ENCODE measurements at regions of chr20 and their contacts with region 1.

Region 1: DNA sequence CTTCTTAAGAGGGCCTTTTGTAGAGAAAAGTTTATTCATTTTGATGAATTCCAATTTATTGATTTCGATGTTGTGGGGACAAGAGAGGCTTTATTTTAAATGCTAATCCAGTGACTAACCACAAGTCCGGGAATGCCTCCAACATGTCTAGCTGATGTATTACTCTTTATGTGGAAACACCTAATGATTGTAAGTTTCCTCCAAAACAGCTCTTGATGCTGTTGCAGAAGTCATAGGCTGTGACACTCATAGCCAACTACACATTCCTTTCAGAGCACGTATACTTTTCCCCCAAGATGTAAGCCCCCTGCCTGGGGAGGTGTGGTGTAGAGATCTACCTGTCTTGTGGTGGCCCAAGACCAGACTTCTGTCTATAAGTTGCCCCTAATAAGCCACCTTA is 61.3 kb upstream of the RNF24 start:
- DNase-seq: no peak
- H3K4me3 ChIP-seq: no peak overlapping the region
- H3K27ac ChIP-seq: no peak overlapping the region
- H3K27me3 ChIP-seq: no peaks in the 10 kb centered on the region
- CTCF ChIP-seq: no peak

Region 2: GRCh38 chr20:3753098-3753980 is 323.3 kb before region 1 on chr20:
- intact Hi-C with region 1: loop called in 1 of 2 experiments (anchors 10 kb)
- DNase-seq: peak in 7 of 10 donors; percentile 41 to 76 (median 51)
- H3K4me3 ChIP-seq: no peak overlapping the region
- H3K27ac ChIP-seq: peak overlapping the region in 4 of 59 donors; percentile 10 to 39 (median 19)
- H3K27me3 ChIP-seq: peaks cover 0 to 25% (median 3%) of the 10 kb centered on the region in 45 donors
- CTCF ChIP-seq: peak; percentile 50 to 87 (median 75)

Region 3: GRCh38 chr20:4555188-4555890 is 478.7 kb after region 1 on chr20:
- intact Hi-C with region 1: no loop called
- DNase-seq: no peak
- H3K4me3 ChIP-seq: no peak overlapping the region
- H3K27ac ChIP-seq: no peak overlapping the region
- H3K27me3 ChIP-seq: peaks cover 0 to 5% (median 0%) of the 10 kb centered on the region in 45 donors
- CTCF ChIP-seq: no peak

Measured in dorsolateral prefrontal cortex (tissue), 120 donors.